ENCODE measurements at regions of chr2 and their contacts with region 1.

Region 1: DNA sequence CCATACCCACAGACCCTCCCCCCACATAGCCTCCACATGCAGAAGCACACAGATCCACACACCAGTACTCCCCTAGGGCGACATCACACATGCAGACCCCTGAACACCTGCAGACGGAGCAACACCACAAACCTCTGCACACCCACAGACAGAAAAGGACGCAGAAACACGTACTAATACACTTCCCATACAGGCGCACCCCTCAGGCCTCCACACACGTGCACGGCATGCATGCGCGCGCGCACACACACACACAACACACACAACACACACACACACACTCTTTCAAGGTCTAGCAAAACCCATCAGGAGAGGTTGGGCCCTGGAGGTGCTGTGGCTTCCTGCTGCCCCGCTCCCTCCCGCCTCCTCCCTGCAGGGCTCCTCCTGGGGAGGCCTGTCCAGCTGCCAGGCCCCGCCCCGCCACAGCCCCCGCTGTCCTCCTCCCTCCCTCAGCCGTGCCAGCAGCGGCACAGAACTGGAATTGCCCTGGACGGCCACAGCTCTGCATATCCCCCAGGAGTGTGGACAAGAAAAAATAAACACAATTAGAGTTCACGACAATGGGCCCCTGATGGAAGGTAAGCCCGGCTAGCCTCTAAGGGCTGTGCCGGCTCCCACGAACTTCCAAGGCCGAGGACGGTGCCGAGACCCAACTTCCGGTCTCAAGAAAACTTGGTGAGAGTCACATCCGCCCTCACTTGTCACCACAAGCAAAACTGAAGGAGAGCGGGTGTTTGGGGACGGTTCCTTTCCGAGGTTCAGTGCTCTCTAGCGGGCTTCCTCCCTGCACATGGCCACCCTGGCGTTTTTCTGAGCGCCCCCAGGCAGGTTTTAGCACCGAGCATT is 6.8 kb downstream of the ZFP36L2 start:
- DNase-seq: peak; percentile 96
- ATAC-seq: peak; percentile 91
- H3K4me3 ChIP-seq: peak overlapping the region; percentile 82
- H3K27ac ChIP-seq: peak overlapping the region; percentile 98
- H3K4me1 ChIP-seq: peaks cover 52% of the 10 kb centered on the region
- H3K27me3 ChIP-seq: no peaks in the 10 kb centered on the region
- CTCF ChIP-seq: no peak

Region 2: DNA sequence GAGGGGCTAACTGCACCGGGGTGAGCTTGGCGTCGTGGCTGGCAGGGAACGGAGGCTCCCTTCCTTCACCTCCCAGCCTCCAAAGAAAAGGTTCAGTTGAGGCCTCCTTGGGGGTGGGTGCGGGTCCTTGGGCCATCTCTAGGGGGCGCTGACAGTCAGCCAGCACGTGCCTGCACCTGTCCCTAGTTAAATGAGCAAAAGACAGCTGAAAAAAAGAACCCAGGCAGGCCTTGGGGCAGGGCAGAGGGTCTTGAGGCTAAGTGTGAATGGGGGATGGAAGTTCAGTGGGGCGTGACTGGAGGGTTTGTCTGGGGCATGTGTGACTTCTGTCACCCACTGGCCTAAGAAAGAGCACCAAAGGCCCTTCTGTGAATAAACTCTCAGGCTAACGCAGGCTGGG is 49.6 kb before region 1 on chr2:
- intact Hi-C with region 1: loop called (anchors 10 kb)
- DNase-seq: no peak
- ATAC-seq: peak; percentile 55
- H3K4me3 ChIP-seq: no peak overlapping the region
- H3K27ac ChIP-seq: peak overlapping the region; percentile 74
- H3K4me1 ChIP-seq: peaks cover 48% of the 10 kb centered on the region
- H3K27me3 ChIP-seq: no peaks in the 10 kb centered on the region
- CTCF ChIP-seq: peak; percentile 56

Region 3: GRCh38 chr2:44470151-44470550 is 1250.5 kb after region 1 on chr2:
- intact Hi-C with region 1: no loop called
- DNase-seq: no peak
- ATAC-seq: no peak
- H3K4me3 ChIP-seq: no peak overlapping the region
- H3K27ac ChIP-seq: no peak overlapping the region
- H3K4me1 ChIP-seq: no peaks in the 10 kb centered on the region
- H3K27me3 ChIP-seq: no peaks in the 10 kb centered on the region
- CTCF ChIP-seq: no peak

Measured in upper lobe of right lung (tissue), 1 donor.